CD4-positive, alpha-beta memory T cell (primary cell): ENCODE measurements at regions of chr11 and their contacts with region 1.

Region 1: DNA sequence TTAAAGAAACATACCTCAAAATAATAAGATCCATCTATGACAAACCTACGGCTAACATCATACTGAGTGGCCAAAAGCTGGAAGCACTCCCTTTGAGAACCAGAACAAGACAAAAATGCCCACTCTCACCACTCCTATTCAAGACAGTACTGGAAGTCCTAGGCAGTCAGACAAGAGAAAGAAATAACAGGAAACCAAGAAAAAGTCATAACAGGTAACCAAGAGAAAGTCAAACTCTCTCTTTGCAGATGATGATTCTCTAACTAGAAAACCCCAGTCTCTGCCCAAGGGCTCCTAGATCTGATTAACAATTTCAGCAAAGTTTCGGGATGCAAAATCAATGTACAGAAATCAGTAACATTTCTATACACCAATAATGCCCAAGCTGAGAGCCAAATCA is 35.6 kb downstream of the TMEM123 start:
- DNase-seq: peak in 2 of 5 donors; percentile 12 to 17
- H3K4me3 ChIP-seq: peak overlapping the region in 1 of 2 donors; percentile 5
- H3K4me3 Mint-ChIP-seq: peak overlapping the region; percentile 75 to 88 (median 82)
- H3K27ac ChIP-seq: peak overlapping the region; percentile 4
- H3K27ac Mint-ChIP-seq: peak overlapping the region; percentile 58 to 94 (median 92)
- H3K4me1 ChIP-seq: peaks cover 98% of the 10 kb centered on the region
- H3K4me1 Mint-ChIP-seq: peaks cover 82 to 96% (median 88%) of the 10 kb centered on the region in 4 donors
- H3K27me3 ChIP-seq: no peaks in the 10 kb centered on the region
- H3K27me3 Mint-ChIP-seq: no peaks in the 10 kb centered on the region

Region 2: GRCh38 chr11:102429691-102430090 is 12.7 kb after region 1 on chr11:
- CTCF ChIA-PET with region 1: no interaction called
- POLR2A ChIA-PET with region 1: interaction called, 6 read pairs
- intact Hi-C with region 1: loop called (anchors 1 kb)
- DNase-seq: no peak
- H3K4me3 ChIP-seq: no peak overlapping the region
- H3K4me3 Mint-ChIP-seq: peak overlapping the region in 5 of 8 donors; percentile 21 to 73 (median 56)
- H3K27ac ChIP-seq: peak overlapping the region; percentile 18
- H3K27ac Mint-ChIP-seq: peak overlapping the region; percentile 71 to 95 (median 84)
- H3K4me1 ChIP-seq: peaks cover 58% of the 10 kb centered on the region
- H3K4me1 Mint-ChIP-seq: peaks cover 58 to 86% (median 65%) of the 10 kb centered on the region in 4 donors
- H3K27me3 ChIP-seq: no peaks in the 10 kb centered on the region
- H3K27me3 Mint-ChIP-seq: no peaks in the 10 kb centered on the region

Region 3: DNA sequence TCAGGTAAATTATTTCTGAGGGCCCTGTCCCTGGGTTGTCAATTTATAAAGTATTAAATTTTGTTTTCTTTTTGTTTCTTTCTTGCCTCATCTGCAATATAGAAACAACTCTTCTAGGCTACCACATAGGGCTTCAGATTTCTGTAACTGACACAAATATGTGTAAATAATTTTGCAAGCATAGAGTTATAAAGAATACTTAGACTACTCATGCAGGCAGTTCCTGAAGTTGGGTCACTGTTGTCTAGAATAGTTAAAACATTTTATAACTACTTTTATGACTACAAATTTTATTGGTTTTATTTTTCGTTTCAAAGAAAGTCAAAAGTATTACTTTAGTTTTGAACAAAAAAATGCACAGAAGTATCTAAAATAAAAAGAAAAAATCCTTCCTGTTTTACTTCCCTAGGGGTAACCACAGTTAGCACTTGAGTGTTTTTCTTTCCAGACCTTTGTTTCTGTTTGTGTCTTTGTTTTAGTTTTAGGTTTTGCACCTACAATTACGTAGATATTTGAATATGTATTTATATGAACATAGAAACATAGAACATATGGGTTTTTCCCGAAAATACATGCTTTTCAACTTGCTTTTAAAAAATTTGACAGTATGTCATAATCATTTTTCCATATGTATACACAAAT is 48.0 kb after region 1 on chr11:
- CTCF ChIA-PET with region 1: no interaction called
- POLR2A ChIA-PET with region 1: no interaction called
- intact Hi-C with region 1: no loop called
- DNase-seq: no peak
- H3K4me3 ChIP-seq: no peak overlapping the region
- H3K4me3 Mint-ChIP-seq: peak overlapping the region in 5 of 8 donors; percentile 41 to 68 (median 51)
- H3K27ac ChIP-seq: no peak overlapping the region
- H3K27ac Mint-ChIP-seq: peak overlapping the region in 5 of 7 donors; percentile 5 to 90 (median 50)
- H3K4me1 ChIP-seq: peaks cover 57% of the 10 kb centered on the region
- H3K4me1 Mint-ChIP-seq: peaks cover 42 to 64% (median 52%) of the 10 kb centered on the region in 4 donors
- H3K27me3 ChIP-seq: no peaks in the 10 kb centered on the region
- H3K27me3 Mint-ChIP-seq: no peaks in the 10 kb centered on the region

Region 4: GRCh38 chr11:102510439-102511135 is 93.6 kb after region 1 on chr11:
- CTCF ChIA-PET with region 1: no interaction called
- POLR2A ChIA-PET with region 1: no interaction called
- intact Hi-C with region 1: no loop called
- DNase-seq: no peak
- H3K4me3 ChIP-seq: no peak overlapping the region
- H3K4me3 Mint-ChIP-seq: no peak overlapping the region
- H3K27ac ChIP-seq: no peak overlapping the region
- H3K27ac Mint-ChIP-seq: no peak overlapping the region
- H3K4me1 ChIP-seq: no peaks in the 10 kb centered on the region
- H3K4me1 Mint-ChIP-seq: peaks cover 0 to 2% (median 0%) of the 10 kb centered on the region in 4 donors
- H3K27me3 ChIP-seq: no peaks in the 10 kb centered on the region
- H3K27me3 Mint-ChIP-seq: peaks cover 2 to 5% of the 10 kb centered on the region in 2 donors

Region 5: DNA sequence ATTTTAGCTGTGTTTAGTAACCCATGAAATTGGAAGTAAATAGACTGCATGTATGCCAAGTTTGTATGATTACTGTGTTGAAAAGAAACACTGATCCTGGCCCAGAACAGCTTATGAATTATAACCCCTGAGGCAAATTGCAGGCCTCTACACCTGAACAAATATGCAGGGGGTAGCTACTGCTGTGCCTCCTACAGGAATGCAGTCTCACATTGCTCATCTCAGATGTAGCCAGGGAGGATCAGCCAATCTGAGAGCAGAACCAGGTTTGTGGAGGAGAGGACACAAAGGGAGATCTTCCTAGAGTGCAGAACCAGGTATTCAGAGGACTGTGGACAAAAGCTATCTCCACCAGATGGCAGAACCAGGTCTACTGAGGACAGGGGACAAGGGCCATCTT is 1177.3 kb after region 1 on chr11:
- CTCF ChIA-PET with region 1: no interaction called
- POLR2A ChIA-PET with region 1: no interaction called
- intact Hi-C with region 1: no loop called
- DNase-seq: no peak
- H3K4me3 ChIP-seq: no peak overlapping the region
- H3K4me3 Mint-ChIP-seq: no peak overlapping the region
- H3K27ac ChIP-seq: no peak overlapping the region
- H3K27ac Mint-ChIP-seq: peak overlapping the region in 1 of 7 donors; percentile 3
- H3K4me1 ChIP-seq: no peaks in the 10 kb centered on the region
- H3K4me1 Mint-ChIP-seq: no peaks in the 10 kb centered on the region
- H3K27me3 ChIP-seq: no peaks in the 10 kb centered on the region
- H3K27me3 Mint-ChIP-seq: peaks cover 0 to 3% of the 10 kb centered on the region in 2 donors